A549 (cell line): ENCODE measurements at regions of chr9 and their contacts with region 1.

Region 1: GRCh38 chr9:97900738-97901565 is 21.3 kb downstream of the TRMO start:
- DNase-seq: peak; percentile 59 to 74
- ATAC-seq: peak; percentile 77 to 86; a peak in 4 of 6 replicates
- H3K4me3 ChIP-seq: no peak overlapping the region
- H3K27ac ChIP-seq: peak overlapping the region in 1 of 2 experiments; percentile 46; a peak in 3 of 6 replicates
- H3K4me1 ChIP-seq: peaks cover 3% of the 10 kb centered on the region; the same call in 2 of the 3 replicates
- CTCF ChIP-seq: peak; percentile 89
- EP300 ChIP-seq: no peak
- POLR2A ChIP-seq: no peak
- RAD21 ChIP-seq: peak; percentile 88 to 89

Region 2: GRCh38 chr9:97696803-97697601 is 203.9 kb before region 1 on chr9 and contains the start of gene XPA:
- CTCF ChIA-PET with region 1: interaction called, 98 read pairs
- POLR2A ChIA-PET with region 1: interaction called, 3 read pairs
- DNase-seq: peak; percentile 95 to 97
- ATAC-seq: peak; percentile 93 to 98
- H3K4me3 ChIP-seq: peak within 1 kb of the TSS; percentile 73
- H3K27ac ChIP-seq: peak within 1 kb of the TSS; percentile 89 to 98
- H3K4me1 ChIP-seq: peaks cover 33% of the 10 kb centered on the region
- CTCF ChIP-seq: no peak
- EP300 ChIP-seq: no peak
- POLR2A ChIP-seq: peak; percentile 94
- RAD21 ChIP-seq: no peak
- polyA plus RNA-seq, gene XPA: 4.5 and 8.0 TPM in 2 replicates

Region 3: GRCh38 chr9:97728256-97728655 is 172.7 kb before region 1 on chr9:
- CTCF ChIA-PET with region 1: interaction called, 15 read pairs
- POLR2A ChIA-PET with region 1: no interaction called
- DNase-seq: no peak
- ATAC-seq: no peak
- H3K4me3 ChIP-seq: no peak overlapping the region
- H3K27ac ChIP-seq: no peak overlapping the region
- H3K4me1 ChIP-seq: 0 out of 3 replicates have a peak, but pooled peaks cover 3% of the 10 kb centered on the region
- CTCF ChIP-seq: no peak
- EP300 ChIP-seq: no peak
- POLR2A ChIP-seq: no peak
- RAD21 ChIP-seq: no peak

Region 4: GRCh38 chr9:97853844-97854695 is 46.9 kb before region 1 on chr9:
- CTCF ChIA-PET with region 1: interaction called, 22 read pairs
- POLR2A ChIA-PET with region 1: no interaction called
- DNase-seq: peak; percentile 41 to 87
- ATAC-seq: peak; percentile 87 to 92
- H3K4me3 ChIP-seq: peak overlapping the region; percentile 74
- H3K27ac ChIP-seq: peak overlapping the region; percentile 96 to 98
- H3K4me1 ChIP-seq: peaks cover 28% of the 10 kb centered on the region
- CTCF ChIP-seq: peak; percentile 75
- EP300 ChIP-seq: no peak
- POLR2A ChIP-seq: peak; percentile 77
- RAD21 ChIP-seq: peak; percentile 17 to 65; a peak in 4 of 5 replicates

Region 5: DNA sequence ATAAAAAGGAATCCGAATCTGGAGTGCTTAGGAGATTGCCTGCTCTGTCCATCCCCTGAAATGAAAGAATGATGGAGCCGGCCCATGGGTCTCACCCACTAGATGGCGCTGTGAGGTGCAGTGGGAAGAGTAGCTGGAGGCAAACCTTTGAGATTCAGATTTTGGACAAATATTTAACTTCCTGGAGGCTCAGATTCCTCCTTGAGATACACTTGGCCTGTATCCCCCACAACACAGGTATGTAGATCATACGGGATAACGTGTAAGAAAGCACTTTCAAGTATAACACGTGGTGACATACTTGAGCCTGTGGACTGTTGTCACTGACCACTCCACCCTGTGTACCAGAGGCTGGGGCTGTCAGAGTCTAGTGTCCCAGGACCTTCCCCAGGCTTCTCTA is 10.9 kb before region 1 on chr9:
- CTCF ChIA-PET with region 1: interaction called, 104 read pairs
- POLR2A ChIA-PET with region 1: no interaction called
- DNase-seq: peak; percentile 21 to 46
- ATAC-seq: peak in 1 of 2 experiments; percentile 72; a peak in 3 of 6 replicates
- H3K4me3 ChIP-seq: no peak overlapping the region
- H3K27ac ChIP-seq: no peak overlapping the region
- H3K4me1 ChIP-seq: no peaks in the 10 kb centered on the region
- CTCF ChIP-seq: peak; percentile 50
- EP300 ChIP-seq: no peak
- POLR2A ChIP-seq: no peak
- RAD21 ChIP-seq: no peak; a peak in 1 of 5 replicates